HEK293 (cell line): ENCODE measurements at regions of chr3 and their contacts with region 1.

Region 1: GRCh38 chr3:14124615-14125190 is at the starts of genes CHCHD4 and TMEM43:
- H3K4me3 ChIP-seq: peak within 1 kb of the TSS; percentile 73
- H3K27ac ChIP-seq: peak within 1 kb of the TSS; percentile 73
- H3K4me1 ChIP-seq: peaks cover 4% of the 10 kb centered on the region
- CTCF ChIP-seq: no peak

Region 2: DNA sequence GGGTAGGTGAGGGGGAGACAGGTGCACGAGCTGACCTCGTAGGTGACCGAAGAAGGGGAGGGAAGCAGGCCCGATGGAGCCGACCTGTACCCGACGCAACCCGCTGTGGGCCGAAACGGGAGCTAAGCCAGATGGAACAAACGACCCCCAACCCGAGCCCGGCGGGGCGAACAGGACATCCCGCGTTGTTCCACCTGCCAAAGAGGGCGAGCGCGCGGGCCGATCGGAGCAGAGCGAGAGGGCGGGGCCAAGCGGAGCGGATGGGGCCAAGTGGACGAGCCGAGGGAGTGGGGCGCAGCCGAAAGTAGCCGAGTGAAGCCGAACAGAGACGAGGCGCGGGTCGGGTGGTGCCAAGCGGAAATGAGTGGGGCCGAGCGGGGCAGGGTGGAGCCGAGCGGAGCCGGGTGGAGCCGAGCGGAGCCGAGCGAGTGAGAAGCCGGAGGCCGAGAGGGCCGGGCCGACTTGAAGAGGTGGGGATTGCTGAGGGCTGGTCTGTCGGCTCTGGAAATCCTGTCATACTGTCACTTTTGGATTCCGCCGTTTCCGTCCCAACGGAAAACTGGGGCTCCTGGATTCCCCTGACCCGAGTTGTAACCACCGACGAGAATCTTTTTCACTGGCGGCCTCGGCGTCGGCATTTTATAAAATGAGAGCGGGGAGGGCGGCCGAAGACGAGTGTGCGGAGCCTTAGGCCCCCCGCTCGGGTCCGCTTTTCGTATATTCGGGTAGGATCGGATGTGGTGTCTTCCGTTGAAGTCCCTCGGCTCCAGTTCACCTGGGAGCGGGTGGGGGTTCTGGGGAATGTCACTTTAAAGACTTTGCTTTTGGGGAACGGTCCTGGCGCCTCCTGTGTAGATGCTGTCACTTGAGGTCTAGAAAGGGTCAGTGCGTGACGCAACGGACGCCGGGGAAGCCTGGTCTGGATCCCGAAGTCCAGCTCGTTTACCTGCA is 229.3 kb before region 1 on chr3:
- CTCF ChIA-PET with region 1: interaction called, 13 read pairs
- POLR2A ChIA-PET with region 1: interaction called, 5 read pairs
- H3K4me3 ChIP-seq: peak overlapping the region; percentile 37
- H3K27ac ChIP-seq: no peak overlapping the region
- H3K4me1 ChIP-seq: no peaks in the 10 kb centered on the region
- CTCF ChIP-seq: no peak

Region 3: DNA sequence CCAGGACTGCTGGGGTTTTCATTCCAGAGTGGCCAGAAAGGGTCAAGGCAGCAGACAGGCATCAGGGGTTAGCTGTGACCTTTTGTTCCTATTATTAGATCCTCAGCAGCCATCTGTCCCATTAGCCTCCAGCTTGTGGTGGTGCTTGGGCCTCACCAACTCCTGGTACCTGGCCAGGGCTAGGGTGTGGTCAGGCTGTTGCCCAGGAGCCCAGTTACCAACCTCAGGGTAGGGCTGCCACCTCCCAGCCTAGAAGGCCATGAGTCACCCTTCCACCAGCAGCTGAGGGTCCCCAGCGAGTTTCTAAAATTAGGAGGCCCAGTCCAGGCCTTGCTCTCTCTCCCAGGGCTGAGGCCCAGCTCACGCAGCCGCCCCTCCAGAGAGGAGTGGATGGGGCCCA is 12.3 kb after region 1 on chr3:
- CTCF ChIA-PET with region 1: no interaction called
- POLR2A ChIA-PET with region 1: interaction called, 20 read pairs
- H3K4me3 ChIP-seq: no peak overlapping the region
- H3K27ac ChIP-seq: no peak overlapping the region
- H3K4me1 ChIP-seq: no peaks in the 10 kb centered on the region
- CTCF ChIP-seq: no peak

Region 4: DNA sequence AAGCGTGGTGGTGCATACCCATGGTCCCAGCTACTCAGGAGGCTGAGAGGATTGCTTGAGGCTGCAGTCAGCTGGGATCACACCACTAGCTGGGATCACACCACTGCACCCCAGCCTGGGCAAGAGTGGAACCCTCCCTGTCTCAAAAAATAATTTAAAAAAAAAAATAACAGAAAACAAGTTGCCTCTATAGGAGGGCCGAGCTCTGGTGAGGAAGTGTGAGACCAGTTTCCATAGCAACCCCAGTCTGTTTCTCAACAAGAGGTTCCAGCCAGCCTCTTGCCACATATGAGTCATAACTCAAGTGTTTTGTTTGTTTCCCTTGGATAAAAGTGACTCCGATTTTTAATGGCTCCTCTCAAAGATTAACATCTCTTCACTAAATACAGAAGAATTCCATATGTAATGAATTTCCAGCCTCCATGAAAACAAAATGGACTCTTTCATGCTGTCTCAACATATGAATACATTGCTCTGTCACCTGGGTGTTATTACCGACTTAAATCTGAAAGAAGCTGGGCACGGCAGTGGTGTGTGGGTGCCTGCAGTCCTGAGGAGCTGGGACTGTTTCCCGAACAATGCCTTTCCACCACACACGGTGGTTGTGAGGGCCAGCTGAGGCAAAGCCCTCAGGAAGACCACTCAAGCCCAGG is 19.8 kb after region 1 on chr3:
- CTCF ChIA-PET with region 1: interaction called, 3 read pairs
- POLR2A ChIA-PET with region 1: interaction called, 12 read pairs
- H3K4me3 ChIP-seq: no peak overlapping the region
- H3K27ac ChIP-seq: peak overlapping the region; percentile 42
- H3K4me1 ChIP-seq: peaks cover 11% of the 10 kb centered on the region
- CTCF ChIP-seq: no peak